Activated naive CD4-positive, alpha-beta T cell treated with anti-CD3 and anti-CD28 coated beads for 36 hours (primary cell): ENCODE measurements at regions of chr9 and their contacts with region 1.

Region 1: DNA sequence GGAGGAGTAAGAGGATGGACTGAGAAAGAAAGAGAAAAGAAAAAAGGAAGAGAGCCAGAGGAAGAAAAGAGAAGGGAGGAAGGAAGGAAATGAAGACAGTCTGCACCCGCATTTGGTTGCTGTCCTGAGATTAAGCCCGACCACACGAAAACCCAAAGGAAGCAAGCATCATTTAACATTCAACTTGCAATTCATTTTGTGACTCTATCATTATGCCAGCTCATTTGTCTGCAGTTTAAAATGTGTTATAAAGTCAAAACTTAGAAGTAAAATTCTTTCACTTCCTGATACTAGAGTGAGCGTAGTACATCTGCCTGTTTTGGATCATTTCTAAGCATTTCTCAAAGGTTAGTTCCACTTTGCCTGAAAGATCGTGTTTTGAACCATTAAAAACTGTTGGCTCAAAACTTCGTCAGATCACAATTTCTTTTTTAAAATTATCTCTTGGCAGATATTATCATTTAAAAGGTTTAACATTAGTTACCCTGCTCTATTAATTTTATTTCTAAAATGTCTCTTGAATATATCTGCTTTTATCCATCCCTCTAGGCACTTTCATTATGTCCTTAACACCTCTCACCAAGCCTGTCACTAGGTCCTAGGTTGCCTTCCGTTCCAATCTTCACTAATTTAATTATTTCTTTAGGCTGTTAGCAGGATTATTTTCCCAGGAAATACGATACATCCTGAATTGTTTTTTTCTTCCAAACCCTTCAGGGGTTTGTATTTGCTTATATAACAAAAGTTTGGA is 240.9 kb downstream of the TLE4 start:
- DNase-seq: peak; percentile 56
- H3K4me3 Mint-ChIP-seq: peak overlapping the region; percentile 47
- H3K27ac Mint-ChIP-seq: no peak overlapping the region
- H3K4me1 Mint-ChIP-seq: peaks cover 23% of the 10 kb centered on the region
- H3K27me3 Mint-ChIP-seq: no peaks in the 10 kb centered on the region

Region 2: DNA sequence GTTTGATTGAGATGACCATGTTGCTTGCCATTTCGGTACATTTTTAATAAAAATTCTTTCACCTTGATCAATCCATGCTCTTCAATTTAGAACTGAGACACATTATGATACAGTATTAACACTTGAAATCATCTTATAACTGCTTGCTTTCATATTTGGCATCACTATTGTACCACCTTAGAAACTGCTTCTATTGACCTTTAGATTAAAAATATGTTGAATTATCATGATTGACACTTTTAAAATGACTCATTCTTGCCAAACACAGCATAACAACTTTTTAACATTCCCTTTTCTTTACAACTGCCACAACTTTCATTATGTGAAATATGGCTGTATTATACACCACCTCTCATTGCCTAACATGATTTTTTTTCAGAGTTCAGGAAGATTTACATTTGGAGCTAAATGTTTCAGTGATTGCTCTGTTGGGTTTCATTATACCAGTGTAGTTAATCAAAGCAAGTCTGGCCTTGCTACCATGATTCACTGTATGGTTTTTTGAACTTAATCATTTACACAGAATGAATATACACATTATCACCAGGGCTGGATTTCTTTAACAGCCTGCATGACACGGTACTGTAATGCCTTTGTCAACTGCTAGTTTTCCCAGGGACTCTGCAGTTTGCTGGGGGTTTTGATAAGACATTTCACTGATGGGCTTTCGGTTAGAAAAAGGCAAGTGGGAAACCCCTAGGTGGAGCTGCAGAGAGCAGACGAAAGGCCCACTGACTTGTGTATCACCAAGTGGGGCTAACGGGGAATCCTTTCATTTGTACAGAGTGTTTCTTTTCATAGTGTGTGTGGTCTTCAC is 334.5 kb before region 1 on chr9:
- CTCF ChIA-PET with region 1: no interaction called
- intact Hi-C with region 1: loop called (anchors 5 kb)
- DNase-seq: peak; percentile 55
- H3K4me3 Mint-ChIP-seq: no peak overlapping the region
- H3K27ac Mint-ChIP-seq: no peak overlapping the region
- H3K4me1 Mint-ChIP-seq: peaks cover 12% of the 10 kb centered on the region
- H3K27me3 Mint-ChIP-seq: no peaks in the 10 kb centered on the region

Region 3: DNA sequence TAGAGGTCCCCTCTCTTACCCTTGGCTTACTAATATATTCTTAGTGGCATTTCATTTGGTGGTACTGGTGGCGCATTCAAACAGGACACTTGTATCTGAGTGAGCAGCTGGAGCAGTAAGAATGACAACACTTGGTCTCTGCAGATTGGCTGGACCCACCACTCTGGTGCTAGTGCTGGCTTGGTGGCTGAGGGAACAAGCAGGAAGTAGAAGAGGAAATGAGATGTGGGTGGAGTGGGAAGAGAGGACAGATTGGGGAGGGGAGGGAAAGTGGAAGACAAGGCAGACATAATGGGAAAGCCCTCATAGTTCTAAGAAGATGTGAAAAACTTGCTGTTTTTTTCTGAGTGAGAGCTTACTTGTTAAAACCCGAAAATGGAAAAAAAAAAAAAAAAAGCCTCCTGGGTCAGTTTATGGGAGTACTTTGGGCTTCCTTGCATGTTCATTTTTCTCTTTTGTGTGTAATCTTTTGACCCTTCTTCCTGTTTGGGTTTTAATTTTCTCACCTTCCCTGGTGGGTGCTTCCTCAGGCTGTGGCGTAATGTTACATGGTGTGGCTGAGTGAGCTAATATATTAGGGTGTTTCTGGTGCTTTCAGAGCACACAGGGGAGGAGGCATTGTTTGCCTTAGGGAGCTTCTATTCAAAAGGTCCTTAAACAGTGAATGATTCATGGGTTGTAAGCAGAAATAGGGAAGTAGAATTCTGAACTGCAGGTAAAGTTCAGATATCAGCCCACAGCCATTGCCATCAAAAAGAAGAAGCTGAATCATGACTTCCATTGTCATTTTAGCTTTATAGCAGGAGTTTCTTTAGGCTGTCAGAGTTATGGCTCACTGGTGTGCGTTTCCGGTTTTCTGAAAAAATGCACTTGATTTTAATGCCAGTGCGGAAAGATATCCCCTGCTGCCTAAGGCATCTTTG is 188.6 kb before region 1 on chr9:
- CTCF ChIA-PET with region 1: no interaction called
- intact Hi-C with region 1: loop called (anchors 5 kb)
- DNase-seq: peak; percentile 59
- H3K4me3 Mint-ChIP-seq: peak overlapping the region; percentile 42
- H3K27ac Mint-ChIP-seq: peak overlapping the region; percentile 81
- H3K4me1 Mint-ChIP-seq: peaks cover 37% of the 10 kb centered on the region
- H3K27me3 Mint-ChIP-seq: no peaks in the 10 kb centered on the region

Region 4: GRCh38 chr9:79824265-79824664 is 11.6 kb after region 1 on chr9:
- CTCF ChIA-PET with region 1: no interaction called
- intact Hi-C with region 1: no loop called
- DNase-seq: no peak
- H3K4me3 Mint-ChIP-seq: no peak overlapping the region
- H3K27ac Mint-ChIP-seq: no peak overlapping the region
- H3K4me1 Mint-ChIP-seq: peaks cover 6% of the 10 kb centered on the region
- H3K27me3 Mint-ChIP-seq: no peaks in the 10 kb centered on the region

Region 5: GRCh38 chr9:79883073-79883645 is 70.5 kb after region 1 on chr9:
- CTCF ChIA-PET with region 1: interaction called, 3 read pairs
- intact Hi-C with region 1: loop called (anchors 2 kb)
- DNase-seq: peak; percentile 53
- H3K4me3 Mint-ChIP-seq: no peak overlapping the region
- H3K27ac Mint-ChIP-seq: no peak overlapping the region
- H3K4me1 Mint-ChIP-seq: peaks cover 62% of the 10 kb centered on the region
- H3K27me3 Mint-ChIP-seq: no peaks in the 10 kb centered on the region

Region 6: DNA sequence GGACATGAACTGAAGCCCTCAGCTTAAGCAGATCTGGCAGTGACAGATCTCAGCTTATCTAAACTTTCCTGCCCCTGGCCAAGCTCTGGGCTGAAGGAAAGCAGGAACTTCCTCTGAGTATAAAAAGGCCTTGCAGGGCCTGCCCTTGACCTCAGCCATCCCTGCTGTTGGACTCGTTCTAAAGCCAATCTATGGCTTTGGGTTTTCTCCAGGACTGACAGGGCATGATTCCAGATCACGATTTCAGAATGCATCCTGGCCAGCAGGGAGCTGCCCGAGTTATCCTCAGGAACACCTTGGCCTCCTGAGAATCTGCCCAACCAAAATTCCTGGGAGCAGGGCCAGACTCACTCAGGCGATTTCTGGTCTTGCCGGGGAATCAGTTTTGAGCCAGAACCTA is 261.8 kb after region 1 on chr9:
- CTCF ChIA-PET with region 1: no interaction called
- intact Hi-C with region 1: no loop called
- DNase-seq: no peak
- H3K4me3 Mint-ChIP-seq: no peak overlapping the region
- H3K27ac Mint-ChIP-seq: no peak overlapping the region
- H3K4me1 Mint-ChIP-seq: no peaks in the 10 kb centered on the region
- H3K27me3 Mint-ChIP-seq: peaks cover 2% of the 10 kb centered on the region

Region 7: DNA sequence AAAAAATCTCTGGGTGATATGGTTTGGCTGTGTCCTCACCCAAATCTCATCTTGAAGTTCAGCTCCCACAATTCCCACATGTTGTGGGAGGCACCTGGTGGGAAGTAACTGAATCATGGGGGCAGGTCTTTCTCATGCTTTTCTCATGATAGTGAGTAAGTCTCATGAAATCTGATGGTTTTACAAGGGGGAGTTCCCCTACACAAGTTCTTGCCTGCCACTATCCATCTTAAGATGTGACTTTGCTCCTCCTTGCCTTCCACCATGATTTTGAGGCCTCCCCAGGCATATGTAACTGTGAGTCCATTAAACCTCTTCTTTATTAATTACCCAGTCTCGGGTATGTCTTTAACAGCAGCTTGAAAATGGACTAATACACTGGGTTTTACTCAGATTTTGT is 273.0 kb after region 1 on chr9:
- CTCF ChIA-PET with region 1: no interaction called
- intact Hi-C with region 1: loop called (anchors 2 kb)
- DNase-seq: peak; percentile 6
- H3K4me3 Mint-ChIP-seq: no peak overlapping the region
- H3K27ac Mint-ChIP-seq: no peak overlapping the region
- H3K4me1 Mint-ChIP-seq: peaks cover 20% of the 10 kb centered on the region
- H3K27me3 Mint-ChIP-seq: peaks cover 2% of the 10 kb centered on the region